ENCODE measurements at regions of chr2 and their contacts with region 1.

Region 1: GRCh38 chr2:219029829-219030165 is 11.5 kb downstream of the CFAP65 start:
- DNase-seq: peak; percentile 76 to 80
- ATAC-seq: peak; percentile 89 to 97; a peak in 5 of 6 replicates
- H3K4me3 ChIP-seq: no peak overlapping the region
- H3K27ac ChIP-seq: no peak overlapping the region
- H3K4me1 ChIP-seq: no peaks in the 10 kb centered on the region
- CTCF ChIP-seq: peak; percentile 88
- EP300 ChIP-seq: no peak
- POLR2A ChIP-seq: no peak
- RAD21 ChIP-seq: peak; percentile 82 to 87

Region 2: GRCh38 chr2:219010162-219010756 is 19.5 kb before region 1 on chr2:
- CTCF ChIA-PET with region 1: interaction called, 18 read pairs
- POLR2A ChIA-PET with region 1: no interaction called
- DNase-seq: peak; percentile 56 to 64
- ATAC-seq: peak; percentile 93 to 96
- H3K4me3 ChIP-seq: no peak overlapping the region
- H3K27ac ChIP-seq: no peak overlapping the region
- H3K4me1 ChIP-seq: no peaks in the 10 kb centered on the region
- CTCF ChIP-seq: peak; percentile 38; the same call in 2 of the 3 replicates
- EP300 ChIP-seq: no peak
- POLR2A ChIP-seq: no peak
- RAD21 ChIP-seq: peak; percentile 32 to 59; a peak in 3 of 5 replicates

Region 3: DNA sequence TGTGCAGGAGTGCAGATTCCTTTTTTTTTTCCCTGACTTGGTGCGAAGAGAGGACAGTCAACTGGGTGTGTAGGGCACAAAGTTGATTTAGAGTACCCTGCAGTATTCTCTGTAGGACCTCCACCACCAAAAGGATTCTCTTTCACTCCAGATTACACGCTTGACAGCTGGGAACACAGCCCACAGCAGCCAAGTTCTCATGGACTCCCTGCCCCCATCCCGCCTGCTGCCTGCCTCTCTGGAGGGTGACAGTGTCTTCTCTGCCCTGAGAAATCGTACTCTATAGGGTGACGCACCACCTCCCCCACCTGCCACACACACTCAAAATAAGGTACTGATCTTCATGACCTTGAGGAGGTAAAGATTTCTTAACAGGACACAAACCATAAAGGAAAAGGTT is 57.6 kb after region 1 on chr2:
- CTCF ChIA-PET with region 1: interaction called, 19 read pairs
- POLR2A ChIA-PET with region 1: no interaction called
- DNase-seq: no peak
- ATAC-seq: no peak
- H3K4me3 ChIP-seq: no peak overlapping the region
- H3K27ac ChIP-seq: no peak overlapping the region
- H3K4me1 ChIP-seq: no peaks in the 10 kb centered on the region
- CTCF ChIP-seq: no peak
- EP300 ChIP-seq: no peak
- POLR2A ChIP-seq: no peak
- RAD21 ChIP-seq: no peak

Region 4: GRCh38 chr2:219119422-219120043 is 89.7 kb after region 1 on chr2:
- CTCF ChIA-PET with region 1: interaction called, 111 read pairs
- POLR2A ChIA-PET with region 1: no interaction called
- DNase-seq: peak; percentile 45 to 62
- ATAC-seq: peak; percentile 83 to 96
- H3K4me3 ChIP-seq: no peak overlapping the region
- H3K27ac ChIP-seq: no peak overlapping the region
- H3K4me1 ChIP-seq: peaks cover 7% of the 10 kb centered on the region
- CTCF ChIP-seq: peak; percentile 83
- EP300 ChIP-seq: no peak
- POLR2A ChIP-seq: no peak
- RAD21 ChIP-seq: peak; percentile 81 to 84

Region 5: GRCh38 chr2:219149667-219150066 is 119.9 kb after region 1 on chr2:
- CTCF ChIA-PET with region 1: interaction called, 173 read pairs
- POLR2A ChIA-PET with region 1: no interaction called
- DNase-seq: no peak
- ATAC-seq: no peak
- H3K4me3 ChIP-seq: no peak overlapping the region
- H3K27ac ChIP-seq: no peak overlapping the region
- H3K4me1 ChIP-seq: peaks cover 9% of the 10 kb centered on the region; the same call in 2 of the 3 replicates
- CTCF ChIP-seq: no peak
- EP300 ChIP-seq: no peak
- POLR2A ChIP-seq: no peak
- RAD21 ChIP-seq: no peak